ENCODE measurements at regions of chr4 and their contacts with region 1.

Region 1: GRCh38 chr4:173195109-173195973 is 26.7 kb downstream of the GALNT7 start:
- DNase-seq: no peak
- ATAC-seq: no peak
- H3K4me3 ChIP-seq: no peak overlapping the region
- H3K4me3 Mint-ChIP-seq: no peak overlapping the region
- H3K27ac ChIP-seq: no peak overlapping the region
- H3K27ac Mint-ChIP-seq: no peak overlapping the region
- H3K4me1 ChIP-seq: peaks cover 4% of the 10 kb centered on the region
- H3K4me1 Mint-ChIP-seq: peaks cover 39% of the 10 kb centered on the region
- H3K27me3 ChIP-seq: no peaks in the 10 kb centered on the region
- H3K27me3 Mint-ChIP-seq: no peaks in the 10 kb centered on the region
- CTCF ChIP-seq: no peak

Region 2: DNA sequence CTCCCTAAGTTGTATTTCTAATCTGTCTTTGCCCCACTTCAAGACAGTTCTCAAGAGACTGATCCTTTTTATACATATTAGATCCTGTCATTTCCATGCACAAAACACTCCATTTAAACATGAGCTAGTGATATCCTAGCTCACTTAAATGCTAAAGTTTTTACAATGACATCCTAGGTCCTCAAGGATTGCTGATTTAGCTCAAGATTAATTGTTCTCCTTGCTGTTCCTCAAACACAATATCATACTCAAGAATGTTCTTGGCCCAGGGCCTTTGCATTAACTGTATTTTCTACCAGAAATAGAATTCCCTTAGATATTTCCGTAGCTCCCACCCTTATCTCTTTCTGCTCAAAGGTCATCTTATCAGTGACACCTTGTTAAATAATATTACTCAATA is 1112.1 kb before region 1 on chr4:
- CTCF ChIA-PET with region 1: no interaction called
- POLR2A ChIA-PET with region 1: no interaction called
- intact Hi-C with region 1: no loop called
- DNase-seq: no peak
- ATAC-seq: no peak
- H3K4me3 ChIP-seq: no peak overlapping the region
- H3K4me3 Mint-ChIP-seq: no peak overlapping the region
- H3K27ac ChIP-seq: no peak overlapping the region
- H3K27ac Mint-ChIP-seq: no peak overlapping the region
- H3K4me1 ChIP-seq: no peaks in the 10 kb centered on the region
- H3K4me1 Mint-ChIP-seq: no peaks in the 10 kb centered on the region
- H3K27me3 ChIP-seq: no peaks in the 10 kb centered on the region
- H3K27me3 Mint-ChIP-seq: no peaks in the 10 kb centered on the region
- CTCF ChIP-seq: no peak

Region 3: DNA sequence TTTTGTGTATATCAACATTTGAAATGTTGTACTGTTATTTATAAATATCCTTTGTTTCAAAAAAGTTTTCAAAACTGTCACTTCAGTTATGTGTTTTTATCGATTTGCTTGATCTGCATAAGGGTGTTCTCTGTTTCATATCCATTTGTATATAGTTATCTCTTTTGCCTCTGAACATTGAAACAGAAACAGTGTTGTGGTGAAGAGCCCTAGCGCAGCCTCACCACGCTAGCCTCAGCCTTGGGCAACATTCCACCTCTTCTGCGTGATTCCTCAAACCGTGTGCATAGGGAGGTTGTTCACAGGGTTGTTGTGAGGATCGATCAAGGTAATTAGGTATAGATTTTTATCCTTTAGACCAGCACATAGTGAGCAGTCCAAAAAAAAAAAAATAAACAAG is 313.7 kb before region 1 on chr4:
- CTCF ChIA-PET with region 1: no interaction called
- POLR2A ChIA-PET with region 1: no interaction called
- intact Hi-C with region 1: no loop called
- DNase-seq: no peak
- ATAC-seq: no peak
- H3K4me3 ChIP-seq: no peak overlapping the region
- H3K4me3 Mint-ChIP-seq: no peak overlapping the region
- H3K27ac ChIP-seq: no peak overlapping the region
- H3K27ac Mint-ChIP-seq: no peak overlapping the region
- H3K4me1 ChIP-seq: no peaks in the 10 kb centered on the region
- H3K4me1 Mint-ChIP-seq: no peaks in the 10 kb centered on the region
- H3K27me3 ChIP-seq: no peaks in the 10 kb centered on the region
- H3K27me3 Mint-ChIP-seq: no peaks in the 10 kb centered on the region
- CTCF ChIP-seq: no peak

Region 4: GRCh38 chr4:173181769-173182354 is 13.5 kb before region 1 on chr4:
- CTCF ChIA-PET with region 1: no interaction called
- POLR2A ChIA-PET with region 1: no interaction called
- intact Hi-C with region 1: loop called in 1 of 2 experiments (anchors 2 kb)
- DNase-seq: no peak
- ATAC-seq: no peak
- H3K4me3 ChIP-seq: no peak overlapping the region
- H3K4me3 Mint-ChIP-seq: no peak overlapping the region
- H3K27ac ChIP-seq: no peak overlapping the region
- H3K27ac Mint-ChIP-seq: no peak overlapping the region
- H3K4me1 ChIP-seq: no peaks in the 10 kb centered on the region
- H3K4me1 Mint-ChIP-seq: peaks cover 27% of the 10 kb centered on the region
- H3K27me3 ChIP-seq: no peaks in the 10 kb centered on the region
- H3K27me3 Mint-ChIP-seq: no peaks in the 10 kb centered on the region
- CTCF ChIP-seq: no peak